Dendritic cell treated with granulocyte-macrophage colony-stimulating factor and Interleukin-4, amounts not matched to agents 40 ng/mL and 50 ng/mL, for 4 days (primary cell): ENCODE measurements at regions of chr15 and their contacts with region 1.

Region 1: GRCh38 chr15:99704444-99704838 is 28.8 kb downstream of the LYSMD4 start:
- H3K4me3 Mint-ChIP-seq: no peak overlapping the region
- H3K27ac Mint-ChIP-seq: no peak overlapping the region
- H3K4me1 Mint-ChIP-seq: peaks cover 18% of the 10 kb centered on the region
- H3K27me3 Mint-ChIP-seq: no peaks in the 10 kb centered on the region

Region 2: DNA sequence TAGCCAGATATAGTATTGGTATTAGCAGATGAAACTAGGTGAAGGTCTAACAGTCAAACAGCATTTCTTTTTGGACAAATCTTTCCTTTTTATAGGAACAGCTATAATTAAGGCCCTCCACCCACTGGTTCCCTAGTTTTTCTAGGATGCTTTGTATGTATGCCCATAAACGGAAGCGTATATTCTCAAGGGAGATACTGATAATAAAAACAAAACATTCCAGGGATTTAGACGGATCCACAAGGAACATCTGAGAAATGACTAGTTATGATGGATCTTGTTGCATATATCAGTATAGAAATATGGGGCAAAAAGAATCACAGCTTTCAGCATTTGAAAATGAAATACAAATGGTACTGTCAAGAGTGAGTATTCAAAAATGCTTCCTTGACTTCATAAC is 430.6 kb before region 1 on chr15:
- intact Hi-C with region 1: loop called (anchors 1 kb)
- H3K4me3 Mint-ChIP-seq: no peak overlapping the region
- H3K27ac Mint-ChIP-seq: no peak overlapping the region
- H3K4me1 Mint-ChIP-seq: no peaks in the 10 kb centered on the region
- H3K27me3 Mint-ChIP-seq: no peaks in the 10 kb centered on the region

Region 3: GRCh38 chr15:99282121-99282520 is 422.3 kb before region 1 on chr15:
- intact Hi-C with region 1: loop called (anchors 1 kb)
- H3K4me3 Mint-ChIP-seq: no peak overlapping the region
- H3K27ac Mint-ChIP-seq: no peak overlapping the region
- H3K4me1 Mint-ChIP-seq: peaks cover 5% of the 10 kb centered on the region
- H3K27me3 Mint-ChIP-seq: no peaks in the 10 kb centered on the region

Region 4: DNA sequence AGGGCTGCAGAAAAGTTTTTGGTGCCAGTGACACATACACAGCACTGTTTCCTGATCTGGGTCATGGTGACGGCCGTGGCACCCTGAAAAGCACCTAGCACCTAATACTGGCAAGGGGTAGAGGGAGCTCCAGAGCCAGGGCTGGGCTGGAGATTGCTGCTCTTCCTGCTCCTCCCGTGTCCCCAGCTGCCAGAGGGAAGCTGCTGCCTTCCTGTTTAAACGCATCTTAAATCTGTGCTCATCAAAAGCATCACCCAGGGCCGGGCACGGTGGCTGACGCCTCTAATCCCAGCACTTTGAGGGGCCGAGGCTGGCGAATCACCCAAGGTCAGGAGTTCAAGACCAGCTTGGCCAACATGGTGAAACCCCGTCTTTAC is 295.4 kb before region 1 on chr15:
- intact Hi-C with region 1: loop called (anchors 5 kb)
- H3K4me3 Mint-ChIP-seq: no peak overlapping the region
- H3K27ac Mint-ChIP-seq: no peak overlapping the region
- H3K4me1 Mint-ChIP-seq: peaks cover 10% of the 10 kb centered on the region
- H3K27me3 Mint-ChIP-seq: peaks cover 3% of the 10 kb centered on the region